CD4-positive, alpha-beta memory T cell (primary cell): ENCODE measurements at regions of chr10 and their contacts with region 1.

Region 1: DNA sequence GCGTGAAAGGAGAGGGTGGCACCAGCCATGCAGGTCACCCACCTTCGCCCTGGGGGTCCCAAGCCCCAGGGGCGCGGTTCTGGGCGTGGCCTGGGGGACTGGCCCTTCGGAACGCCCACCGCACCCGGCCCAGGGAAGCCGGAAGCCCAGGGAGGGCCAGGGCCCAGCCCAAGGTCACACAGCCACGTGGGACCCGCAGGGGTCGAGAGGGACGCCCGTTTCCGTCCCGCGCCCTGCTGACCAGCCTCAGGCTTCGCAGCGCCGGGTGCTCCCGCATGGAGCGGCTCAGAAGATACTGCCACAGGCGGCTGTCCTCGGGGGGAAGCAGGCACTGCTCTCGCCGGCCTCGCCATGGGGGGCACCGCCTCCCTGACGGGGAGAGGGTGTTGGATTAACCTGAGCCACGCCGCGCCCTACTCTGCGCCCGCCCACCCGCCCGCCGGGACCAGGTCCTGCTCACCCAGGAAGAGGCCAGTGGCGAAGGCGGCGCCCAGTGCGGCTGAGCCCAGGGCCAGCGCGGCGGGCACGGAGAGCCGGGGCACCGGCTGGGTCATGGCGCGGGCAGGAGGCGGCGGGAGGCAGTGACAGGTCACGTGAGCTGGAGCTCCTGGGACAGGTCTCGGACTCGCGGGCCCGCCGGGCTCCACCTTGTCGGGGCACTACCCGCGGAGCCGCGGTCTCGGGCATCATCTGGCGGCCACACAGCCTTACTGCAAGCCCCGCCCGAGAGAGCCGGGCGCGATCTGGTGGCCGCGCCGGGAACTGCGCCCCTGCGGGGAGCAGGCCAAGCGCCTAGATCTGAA is at the start of gene COMTD1:
- DNase-seq: peak; percentile 91 to 95 (median 92)
- H3K4me3 ChIP-seq: peak within 1 kb of the TSS; percentile 52 to 68
- H3K4me3 Mint-ChIP-seq: peak within 1 kb of the TSS; percentile 74 to 87 (median 84)
- H3K27ac ChIP-seq: peak within 1 kb of the TSS; percentile 45
- H3K27ac Mint-ChIP-seq: peak within 1 kb of the TSS; percentile 80 to 99 (median 91)
- H3K4me1 ChIP-seq: peaks cover 18% of the 10 kb centered on the region
- H3K4me1 Mint-ChIP-seq: peaks cover 5 to 36% (median 18%) of the 10 kb centered on the region in 4 donors
- H3K27me3 ChIP-seq: no peaks in the 10 kb centered on the region
- H3K27me3 Mint-ChIP-seq: no peaks in the 10 kb centered on the region
- total RNA-seq, gene COMTD1: 12.7 to 15.4 TPM

Region 2: DNA sequence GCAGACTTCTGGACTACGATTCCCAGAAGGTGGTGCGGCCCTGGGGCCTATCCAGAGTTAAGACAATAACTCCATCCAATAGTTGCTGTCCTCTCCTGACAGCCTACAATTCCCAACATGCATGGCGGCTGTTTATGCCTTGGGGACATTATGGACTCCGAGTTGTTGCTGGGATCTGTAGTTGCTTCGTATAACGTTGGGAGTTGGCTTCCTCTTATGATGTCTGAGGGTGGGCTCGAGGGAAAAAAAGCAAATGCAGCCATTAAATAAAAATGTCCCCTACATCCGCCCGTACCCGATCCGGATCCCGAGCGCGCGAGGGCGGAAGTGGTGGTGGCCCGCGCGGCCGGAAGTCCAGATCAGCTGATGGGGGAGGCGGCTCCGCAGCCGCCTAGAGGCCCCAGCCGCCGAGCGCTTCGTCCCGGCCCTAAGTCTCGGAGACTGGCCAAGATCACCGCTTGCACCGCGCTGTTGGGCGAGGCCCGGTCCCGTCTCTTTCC is 1450.3 kb before region 1 on chr10 and contains the start of gene ZSWIM8:
- CTCF ChIA-PET with region 1: no interaction called
- POLR2A ChIA-PET with region 1: no interaction called
- intact Hi-C with region 1: loop called (anchors 10 kb)
- DNase-seq: peak; percentile 85 to 96 (median 89)
- H3K4me3 ChIP-seq: peak within 1 kb of the TSS; percentile 62 to 64
- H3K4me3 Mint-ChIP-seq: peak within 1 kb of the TSS; percentile 94 to 99 (median 98)
- H3K27ac ChIP-seq: peak within 1 kb of the TSS; percentile 77
- H3K27ac Mint-ChIP-seq: peak within 1 kb of the TSS; percentile 95 to 99 (median 99)
- H3K4me1 ChIP-seq: peaks cover 54% of the 10 kb centered on the region
- H3K4me1 Mint-ChIP-seq: peaks cover 35 to 67% (median 50%) of the 10 kb centered on the region in 4 donors
- H3K27me3 ChIP-seq: no peaks in the 10 kb centered on the region
- H3K27me3 Mint-ChIP-seq: peaks cover 2% of the 10 kb centered on the region in 2 donors
- total RNA-seq, gene ZSWIM8: 93.3 to 100 TPM

Region 3: DNA sequence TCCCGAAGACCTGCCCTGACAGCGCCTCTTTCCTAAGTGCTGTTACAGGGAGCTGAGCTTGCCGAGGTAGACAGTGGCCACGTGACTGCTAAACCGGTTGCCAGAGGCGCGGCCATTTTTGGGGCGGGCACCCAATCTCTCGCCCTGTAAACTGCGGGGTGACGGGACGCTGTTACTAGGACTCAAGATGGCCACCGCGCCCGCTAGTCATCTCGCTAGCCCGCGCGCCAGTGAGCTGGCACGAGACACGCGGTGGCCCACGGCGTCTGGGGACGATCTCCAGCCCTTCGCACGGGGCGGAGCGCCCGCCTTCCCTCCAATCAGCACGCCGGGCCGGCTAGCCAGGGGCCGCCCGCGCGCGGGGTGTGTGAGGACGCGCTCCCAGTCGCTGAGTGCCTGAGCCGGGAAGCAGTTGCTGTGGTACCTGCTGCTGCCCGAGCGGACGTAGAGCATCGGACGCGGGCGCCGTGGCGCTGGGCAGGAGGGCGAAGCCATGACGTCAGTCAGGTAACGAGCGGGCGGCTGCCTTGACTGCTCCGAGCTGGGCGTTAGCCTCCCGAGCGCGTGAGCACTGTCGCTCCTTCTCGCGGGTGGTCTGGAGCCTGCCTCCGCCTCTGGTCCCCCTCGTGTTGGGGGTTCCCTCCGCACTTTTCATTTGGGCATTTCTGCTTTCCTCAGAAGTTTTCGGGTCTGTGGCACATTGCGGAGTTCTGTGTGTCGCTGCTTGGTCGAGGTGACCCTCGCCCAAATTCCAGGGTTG is 1059.0 kb before region 1 on chr10:
- CTCF ChIA-PET with region 1: interaction called, 3 read pairs
- POLR2A ChIA-PET with region 1: no interaction called
- intact Hi-C with region 1: loop called (anchors 1 kb)
- DNase-seq: peak; percentile 95 to 98 (median 97)
- H3K4me3 ChIP-seq: peak overlapping the region; percentile 82 to 92
- H3K4me3 Mint-ChIP-seq: peak overlapping the region; percentile 90 to 94 (median 93)
- H3K27ac ChIP-seq: peak overlapping the region; percentile 76
- H3K27ac Mint-ChIP-seq: peak overlapping the region; percentile 96 to 98 (median 97)
- H3K4me1 ChIP-seq: peaks cover 42% of the 10 kb centered on the region
- H3K4me1 Mint-ChIP-seq: peaks cover 24 to 49% (median 39%) of the 10 kb centered on the region in 4 donors
- H3K27me3 ChIP-seq: no peaks in the 10 kb centered on the region
- H3K27me3 Mint-ChIP-seq: no peaks in the 10 kb centered on the region

Region 4: DNA sequence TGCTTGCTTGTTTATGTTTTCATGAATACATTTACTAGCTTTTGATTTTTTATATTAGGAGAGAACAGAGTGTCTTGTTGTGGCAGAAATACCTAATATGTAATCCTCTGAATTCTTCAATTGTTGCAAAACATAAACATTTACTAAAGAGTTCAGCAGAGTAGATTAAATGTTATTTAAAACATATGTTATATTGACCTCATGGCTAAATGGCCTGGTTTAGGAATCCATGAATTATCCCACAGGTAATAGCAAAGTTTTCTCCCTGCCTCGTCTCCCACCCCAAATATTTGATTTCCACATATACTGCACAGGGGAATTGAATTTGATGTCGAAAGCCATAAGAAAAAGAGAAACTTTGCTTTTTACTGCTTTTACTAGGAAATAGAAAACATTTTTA is 972.7 kb before region 1 on chr10:
- CTCF ChIA-PET with region 1: interaction called, 5 read pairs
- POLR2A ChIA-PET with region 1: no interaction called
- intact Hi-C with region 1: loop called (anchors 1 kb)
- DNase-seq: no peak
- H3K4me3 ChIP-seq: no peak overlapping the region
- H3K4me3 Mint-ChIP-seq: no peak overlapping the region
- H3K27ac ChIP-seq: no peak overlapping the region
- H3K27ac Mint-ChIP-seq: peak overlapping the region in 2 of 7 donors; percentile 19 to 57
- H3K4me1 ChIP-seq: no peaks in the 10 kb centered on the region
- H3K4me1 Mint-ChIP-seq: peaks cover 0 to 12% (median 7%) of the 10 kb centered on the region in 4 donors
- H3K27me3 ChIP-seq: no peaks in the 10 kb centered on the region
- H3K27me3 Mint-ChIP-seq: no peaks in the 10 kb centered on the region

Region 5: GRCh38 chr10:75029857-75030256 is 205.7 kb before region 1 on chr10:
- CTCF ChIA-PET with region 1: no interaction called
- POLR2A ChIA-PET with region 1: no interaction called
- intact Hi-C with region 1: loop called (anchors 10 kb)
- DNase-seq: no peak
- H3K4me3 ChIP-seq: no peak overlapping the region
- H3K4me3 Mint-ChIP-seq: no peak overlapping the region
- H3K27ac ChIP-seq: no peak overlapping the region
- H3K27ac Mint-ChIP-seq: peak overlapping the region in 1 of 7 donors; percentile 38
- H3K4me1 ChIP-seq: peaks cover 6% of the 10 kb centered on the region
- H3K4me1 Mint-ChIP-seq: peaks cover 7 to 13% (median 9%) of the 10 kb centered on the region in 4 donors
- H3K27me3 ChIP-seq: no peaks in the 10 kb centered on the region
- H3K27me3 Mint-ChIP-seq: no peaks in the 10 kb centered on the region

Region 6: GRCh38 chr10:75187961-75188426 is 47.6 kb before region 1 on chr10:
- CTCF ChIA-PET with region 1: interaction called, 399 read pairs
- POLR2A ChIA-PET with region 1: interaction called, 23 read pairs
- intact Hi-C with region 1: loop called (anchors 1 kb)
- DNase-seq: peak; percentile 75 to 80 (median 76)
- H3K4me3 ChIP-seq: no peak overlapping the region
- H3K4me3 Mint-ChIP-seq: no peak overlapping the region
- H3K27ac ChIP-seq: no peak overlapping the region
- H3K27ac Mint-ChIP-seq: peak overlapping the region; percentile 61 to 90 (median 70)
- H3K4me1 ChIP-seq: peaks cover 5% of the 10 kb centered on the region
- H3K4me1 Mint-ChIP-seq: peaks cover 5 to 9% (median 5%) of the 10 kb centered on the region in 4 donors
- H3K27me3 ChIP-seq: no peaks in the 10 kb centered on the region
- H3K27me3 Mint-ChIP-seq: no peaks in the 10 kb centered on the region